Sigmoid colon (tissue), 7 donors: ENCODE measurements at regions of chr21 and their contacts with region 1.

Region 1: GRCh38 chr21:26007951-26008498 is 162.5 kb downstream of the APP start:
- DNase-seq: no peak
- H3K4me3 ChIP-seq: no peak overlapping the region
- H3K27ac ChIP-seq: peak overlapping the region in 2 of 4 donors; percentile 12 to 43
- H3K4me1 ChIP-seq: peaks cover 0 to 3% (median 0%) of the 10 kb centered on the region in 4 donors
- H3K27me3 ChIP-seq: no peaks in the 10 kb centered on the region
- CTCF ChIP-seq: no peak
- EP300 ChIP-seq: no peak
- POLR2A ChIP-seq: no peak

Region 2: GRCh38 chr21:25307489-25307888 is 700.5 kb before region 1 on chr21:
- intact Hi-C with region 1: no loop called
- DNase-seq: no peak
- H3K4me3 ChIP-seq: no peak overlapping the region
- H3K27ac ChIP-seq: no peak overlapping the region
- H3K4me1 ChIP-seq: no peaks in the 10 kb centered on the region
- H3K27me3 ChIP-seq: no peaks in the 10 kb centered on the region
- CTCF ChIP-seq: no peak
- EP300 ChIP-seq: no peak
- POLR2A ChIP-seq: no peak

Region 3: GRCh38 chr21:25895565-25896205 is 112.3 kb before region 1 on chr21:
- intact Hi-C with region 1: loop called (anchors 10 kb)
- DNase-seq: no peak
- H3K4me3 ChIP-seq: no peak overlapping the region
- H3K27ac ChIP-seq: no peak overlapping the region
- H3K4me1 ChIP-seq: peaks cover 0 to 6% (median 0%) of the 10 kb centered on the region in 4 donors
- H3K27me3 ChIP-seq: no peaks in the 10 kb centered on the region
- CTCF ChIP-seq: peak in 3 of 4 experiments; percentile 13 to 49 (median 45)
- EP300 ChIP-seq: no peak
- POLR2A ChIP-seq: no peak

Region 4: DNA sequence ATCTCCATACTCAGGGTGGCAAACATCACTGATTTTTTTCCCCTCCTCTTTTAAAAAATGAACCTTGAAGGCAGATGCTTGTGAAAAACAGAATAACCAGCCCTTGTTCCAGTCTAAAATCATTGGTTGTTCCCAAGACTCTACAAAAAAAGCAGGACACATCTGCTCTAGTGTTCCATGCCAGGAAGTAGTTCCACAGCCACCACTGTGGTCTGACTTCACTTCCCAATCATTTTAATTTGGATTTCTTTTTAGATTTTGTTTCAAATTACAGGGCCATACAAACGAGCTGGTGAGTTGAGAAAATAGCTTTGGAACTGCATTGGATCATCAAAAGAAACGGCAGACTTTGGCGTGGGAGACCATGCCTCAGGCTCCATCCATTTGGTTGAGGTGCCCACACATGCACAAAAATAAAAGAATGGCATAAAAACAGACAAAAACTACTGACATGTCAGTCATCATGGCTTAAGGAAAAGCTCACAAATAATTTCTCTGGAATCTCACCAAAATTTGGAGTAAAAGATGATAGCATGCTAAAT is 63.3 kb before region 1 on chr21:
- intact Hi-C with region 1: no loop called
- DNase-seq: no peak
- H3K4me3 ChIP-seq: no peak overlapping the region
- H3K27ac ChIP-seq: peak overlapping the region in 1 of 4 donors; percentile 21
- H3K4me1 ChIP-seq: peaks cover 0 to 4% (median under 1%) of the 10 kb centered on the region in 4 donors
- H3K27me3 ChIP-seq: no peaks in the 10 kb centered on the region
- CTCF ChIP-seq: no peak
- EP300 ChIP-seq: no peak
- POLR2A ChIP-seq: no peak

Region 5: GRCh38 chr21:26709090-26709489 is 701.1 kb after region 1 on chr21:
- intact Hi-C with region 1: loop called (anchors 5 kb)
- DNase-seq: no peak
- H3K4me3 ChIP-seq: no peak overlapping the region
- H3K27ac ChIP-seq: no peak overlapping the region
- H3K4me1 ChIP-seq: no peaks in the 10 kb centered on the region
- H3K27me3 ChIP-seq: no peaks in the 10 kb centered on the region
- CTCF ChIP-seq: no peak
- EP300 ChIP-seq: no peak
- POLR2A ChIP-seq: no peak